ENCODE measurements at regions of chr22 and their contacts with region 1.

Region 1: DNA sequence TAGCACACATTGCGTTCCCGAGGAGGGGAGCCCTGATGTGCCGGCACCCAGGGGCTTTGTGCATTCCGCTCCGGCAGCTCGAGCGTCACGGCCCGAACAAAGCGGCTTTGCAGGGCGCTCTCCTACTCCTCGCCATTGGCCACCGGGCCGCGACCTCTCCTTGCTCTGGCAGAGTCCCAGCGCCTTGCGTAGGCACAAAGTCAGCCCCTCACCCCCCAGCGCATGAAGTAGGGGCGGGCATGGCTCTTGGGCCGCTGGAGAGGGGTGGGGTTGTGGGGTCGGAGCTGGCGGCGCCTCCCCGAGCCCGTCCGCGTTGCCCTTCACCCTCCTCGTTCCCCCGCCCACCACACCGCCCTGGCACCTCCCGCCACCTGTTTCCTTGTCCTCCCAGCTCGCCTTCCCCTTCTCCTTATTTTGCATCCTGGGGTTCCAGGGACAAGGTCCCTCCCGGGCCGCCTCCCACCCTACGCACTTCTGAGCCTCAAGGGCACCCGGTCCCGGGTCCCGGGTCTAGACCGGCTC is 753 bp upstream of the PPARA start:
- DNase-seq: peak; percentile 54 to 84
- ATAC-seq: peak; percentile 37 to 63 (median 54)
- H3K4me3 ChIP-seq: peak overlapping the region; percentile 94
- H3K27ac ChIP-seq: peak overlapping the region; percentile 93
- H3K4me1 ChIP-seq: peaks cover 45% of the 10 kb centered on the region
- H3K27me3 ChIP-seq: no peaks in the 10 kb centered on the region
- CTCF ChIP-seq: no peak

Region 2: DNA sequence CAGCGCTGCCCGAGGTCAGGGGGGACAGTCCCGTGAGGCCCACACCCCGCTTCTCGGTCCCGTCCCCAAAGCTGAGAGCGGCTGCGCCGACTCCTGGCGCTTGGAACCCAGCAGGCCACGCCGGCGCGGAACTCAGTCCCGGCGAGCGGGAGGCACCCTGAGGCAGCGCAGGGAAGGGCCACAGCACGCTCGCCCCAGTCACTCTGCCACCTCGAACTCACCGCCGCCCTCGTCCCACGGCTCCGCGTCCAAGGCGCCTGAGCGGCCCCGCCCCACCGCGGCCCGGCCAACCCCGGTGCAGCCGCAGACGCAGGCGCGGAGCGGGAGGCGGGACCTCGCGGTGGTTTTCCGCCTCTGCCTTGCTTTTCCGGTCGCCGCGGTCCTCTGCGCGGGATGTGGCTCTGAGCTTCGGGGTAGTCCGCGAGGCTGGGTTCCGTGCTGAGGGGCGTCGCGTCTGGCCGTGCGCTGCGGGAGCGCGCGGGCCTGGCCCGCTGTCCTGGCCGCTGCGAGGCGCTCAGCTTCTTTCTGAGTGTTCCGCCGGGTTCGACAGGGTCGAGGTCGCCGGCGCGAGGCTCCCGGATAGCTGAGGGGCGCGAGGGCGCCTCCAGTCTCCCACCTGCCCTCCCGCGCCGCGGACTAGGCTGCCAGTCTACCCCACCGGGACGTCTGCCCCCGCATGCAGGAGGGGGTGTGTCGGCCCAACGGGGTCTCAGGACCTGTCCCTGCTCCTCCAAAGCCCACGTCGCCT is 100.6 kb after region 1 on chr22 and contains the start of gene CDPF1:
- intact Hi-C with region 1: loop called (anchors 5 kb)
- DNase-seq: peak; percentile 93 to 95
- ATAC-seq: peak; percentile 91 to 94 (median 92)
- H3K4me3 ChIP-seq: peak within 1 kb of the TSS; percentile 97
- H3K27ac ChIP-seq: peak within 1 kb of the TSS; percentile 93
- H3K4me1 ChIP-seq: peaks cover 31% of the 10 kb centered on the region
- H3K27me3 ChIP-seq: no peaks in the 10 kb centered on the region
- CTCF ChIP-seq: no peak
- total RNA-seq, gene CDPF1: 5.3 to 9.1 (median 8.8) TPM

Region 3: DNA sequence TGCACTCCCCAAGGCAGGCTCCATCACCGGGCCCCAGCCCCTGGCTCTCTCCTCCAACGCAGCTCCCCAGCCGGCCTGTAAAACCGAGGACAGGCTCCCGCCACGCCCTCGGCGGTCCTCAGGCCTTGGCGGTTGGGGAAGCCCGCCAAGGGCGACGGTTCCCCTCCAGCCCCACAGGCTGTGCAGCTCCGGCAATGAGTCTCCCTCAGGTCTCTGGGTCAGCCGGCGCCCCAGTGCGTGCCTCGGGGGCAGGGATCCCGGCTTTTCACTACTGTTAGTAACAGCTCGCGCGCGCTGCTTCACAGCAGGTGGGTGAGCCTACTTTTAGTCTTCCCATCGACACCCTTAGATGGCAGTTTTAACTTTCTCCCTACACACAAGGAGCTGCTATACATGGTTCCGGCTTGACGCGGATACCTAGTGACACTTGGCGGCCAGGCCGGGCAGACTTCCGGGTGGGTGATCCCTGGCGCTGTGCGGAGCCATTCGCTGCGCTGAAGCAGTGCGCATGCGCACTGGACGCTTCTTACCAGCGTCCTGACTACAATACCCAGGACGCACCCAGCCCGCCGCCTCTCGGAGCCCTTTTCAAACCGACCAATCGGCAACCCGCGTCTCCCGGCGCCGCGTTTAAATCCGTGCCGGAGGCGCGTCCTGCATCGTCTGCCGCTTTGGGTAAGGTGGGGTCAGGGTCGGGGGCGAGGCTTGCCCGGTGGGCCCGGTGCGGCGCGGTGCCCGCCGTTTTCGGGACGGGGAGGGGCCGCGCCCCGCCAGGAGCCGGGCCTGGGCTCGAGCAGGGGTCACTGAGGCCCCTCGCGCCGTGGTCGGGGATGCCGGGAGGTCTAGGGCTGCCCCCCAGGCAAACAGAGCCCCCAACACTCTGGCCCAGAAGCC is 146.9 kb after region 1 on chr22 and contains the start of gene GTSE1:
- intact Hi-C with region 1: loop called (anchors 5 kb)
- DNase-seq: peak; percentile 98 to 99
- ATAC-seq: peak; percentile 96 to 99 (median 98)
- H3K4me3 ChIP-seq: peak within 1 kb of the TSS; percentile 74
- H3K27ac ChIP-seq: peak within 1 kb of the TSS; percentile 89
- H3K4me1 ChIP-seq: peaks cover 7% of the 10 kb centered on the region
- H3K27me3 ChIP-seq: no peaks in the 10 kb centered on the region
- CTCF ChIP-seq: peak; percentile 20
- total RNA-seq, gene GTSE1: 0.15 to 0.47 (median 0.29) TPM in 3 of 4 donors, not detected in the other